ENCODE measurements at regions of chr11 and their contacts with region 1.

Region 1: GRCh38 chr11:7694235-7694634 is 12.0 kb downstream of the OVCH2 start:
- DNase-seq: no peak
- H3K4me3 ChIP-seq: no peak overlapping the region
- H3K4me3 Mint-ChIP-seq: no peak overlapping the region
- H3K27ac ChIP-seq: no peak overlapping the region
- H3K27ac Mint-ChIP-seq: no peak overlapping the region
- H3K4me1 ChIP-seq: peaks cover 6% of the 10 kb centered on the region
- H3K4me1 Mint-ChIP-seq: no peaks in the 10 kb centered on the region
- H3K27me3 ChIP-seq: no peaks in the 10 kb centered on the region
- H3K27me3 Mint-ChIP-seq: peaks cover 21% of the 10 kb centered on the region in 2 donors

Region 2: DNA sequence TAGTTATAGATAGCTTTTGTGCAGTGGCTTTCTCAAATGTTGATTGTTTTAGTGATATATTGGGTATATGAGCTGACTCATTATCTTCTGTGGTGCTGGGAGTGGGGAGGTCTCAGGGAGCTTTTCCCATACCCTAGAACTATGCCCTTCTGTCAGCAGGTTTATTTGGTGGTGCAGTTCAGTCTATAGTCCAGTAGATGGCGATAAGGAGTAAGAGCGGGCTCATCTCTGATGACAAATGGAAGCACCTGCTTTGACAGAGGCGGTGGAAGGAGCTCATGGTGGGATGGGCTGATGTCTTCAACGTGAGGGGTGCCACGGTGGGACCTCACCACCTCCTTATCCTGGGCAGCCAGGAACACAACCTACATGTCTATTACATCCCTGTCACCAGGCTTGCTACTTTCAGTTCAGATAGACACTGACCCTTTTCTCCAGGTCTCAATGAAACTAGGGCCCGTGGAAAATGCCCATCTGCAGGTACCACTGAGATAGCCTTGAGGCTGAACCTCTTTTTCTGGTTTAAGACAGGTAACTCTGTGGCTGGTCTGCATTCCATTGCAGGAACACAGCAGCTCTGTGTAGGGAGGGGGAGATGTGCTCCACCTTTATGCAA is 881.7 kb before region 1 on chr11:
- CTCF ChIA-PET with region 1: interaction called, 8 read pairs
- POLR2A ChIA-PET with region 1: no interaction called
- intact Hi-C with region 1: loop called (anchors 1 kb)
- DNase-seq: peak; percentile 39 to 51 (median 45)
- H3K4me3 ChIP-seq: no peak overlapping the region
- H3K4me3 Mint-ChIP-seq: peak overlapping the region in 1 of 8 donors; percentile 36
- H3K27ac ChIP-seq: no peak overlapping the region
- H3K27ac Mint-ChIP-seq: no peak overlapping the region
- H3K4me1 ChIP-seq: no peaks in the 10 kb centered on the region
- H3K4me1 Mint-ChIP-seq: peaks cover 0 to 2% (median 0%) of the 10 kb centered on the region in 4 donors
- H3K27me3 ChIP-seq: no peaks in the 10 kb centered on the region
- H3K27me3 Mint-ChIP-seq: peaks cover 27 to 35% of the 10 kb centered on the region in 2 donors

Region 3: DNA sequence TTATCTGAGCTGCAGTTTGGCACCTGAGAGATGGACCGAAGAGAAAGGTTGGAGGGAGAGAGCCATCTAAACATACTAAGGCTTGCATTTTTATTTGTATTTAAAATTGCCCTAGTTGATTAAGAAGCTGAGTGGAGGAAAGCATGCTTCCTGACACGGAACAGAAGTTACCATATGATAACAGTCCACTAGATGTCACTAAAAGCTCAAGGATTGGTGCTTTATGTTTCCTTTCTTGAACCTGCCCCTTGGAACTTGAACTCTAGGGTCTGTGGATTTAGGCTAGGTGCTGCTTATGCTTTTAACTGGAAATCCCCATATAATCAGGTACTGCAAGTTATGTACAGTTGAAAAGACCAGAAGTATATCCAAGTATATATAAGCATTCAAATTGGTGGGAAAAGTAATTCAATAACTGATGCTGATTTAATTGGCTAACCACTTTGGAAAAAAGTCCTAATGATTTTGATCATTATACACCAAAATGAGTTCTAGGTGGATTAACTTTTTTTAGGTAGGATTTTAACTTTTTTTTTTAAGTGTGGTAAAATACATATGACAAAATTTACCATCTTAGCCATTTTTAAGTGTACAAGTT is 595.9 kb before region 1 on chr11:
- CTCF ChIA-PET with region 1: interaction called, 29 read pairs
- POLR2A ChIA-PET with region 1: no interaction called
- intact Hi-C with region 1: loop called (anchors 1 kb)
- DNase-seq: peak; percentile 32 to 47 (median 39)
- H3K4me3 ChIP-seq: no peak overlapping the region
- H3K4me3 Mint-ChIP-seq: no peak overlapping the region
- H3K27ac ChIP-seq: no peak overlapping the region
- H3K27ac Mint-ChIP-seq: no peak overlapping the region
- H3K4me1 ChIP-seq: no peaks in the 10 kb centered on the region
- H3K4me1 Mint-ChIP-seq: no peaks in the 10 kb centered on the region
- H3K27me3 ChIP-seq: no peaks in the 10 kb centered on the region
- H3K27me3 Mint-ChIP-seq: peaks cover 5 to 11% of the 10 kb centered on the region in 2 donors

Region 4: GRCh38 chr11:7612661-7613393 is 81.4 kb before region 1 on chr11:
- CTCF ChIA-PET with region 1: no interaction called
- POLR2A ChIA-PET with region 1: no interaction called
- intact Hi-C with region 1: no loop called
- DNase-seq: no peak
- H3K4me3 ChIP-seq: no peak overlapping the region
- H3K4me3 Mint-ChIP-seq: no peak overlapping the region
- H3K27ac ChIP-seq: no peak overlapping the region
- H3K27ac Mint-ChIP-seq: no peak overlapping the region
- H3K4me1 ChIP-seq: no peaks in the 10 kb centered on the region
- H3K4me1 Mint-ChIP-seq: no peaks in the 10 kb centered on the region
- H3K27me3 ChIP-seq: no peaks in the 10 kb centered on the region
- H3K27me3 Mint-ChIP-seq: no peaks in the 10 kb centered on the region

Region 5: DNA sequence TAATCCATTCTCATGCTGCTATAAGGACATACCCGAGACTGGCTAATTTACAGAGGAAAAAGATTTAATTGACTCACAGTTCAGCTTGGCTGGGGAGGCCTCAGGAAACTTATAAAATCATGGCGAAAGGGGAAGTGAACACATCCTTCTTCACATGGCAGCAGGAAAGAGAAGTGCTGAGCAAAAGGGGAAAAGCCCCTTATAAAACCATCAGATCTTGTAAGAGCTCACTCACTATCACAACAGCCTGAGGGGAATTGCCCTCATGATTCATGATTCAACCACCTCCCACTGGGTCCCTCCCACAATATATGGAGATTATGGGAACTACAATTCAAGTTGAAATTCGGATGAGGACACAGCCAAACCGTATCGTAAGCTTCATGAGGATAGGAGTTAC is 17.2 kb before region 1 on chr11:
- CTCF ChIA-PET with region 1: interaction called, 16 read pairs
- POLR2A ChIA-PET with region 1: no interaction called
- intact Hi-C with region 1: no loop called
- DNase-seq: no peak
- H3K4me3 ChIP-seq: no peak overlapping the region
- H3K4me3 Mint-ChIP-seq: no peak overlapping the region
- H3K27ac ChIP-seq: no peak overlapping the region
- H3K27ac Mint-ChIP-seq: no peak overlapping the region
- H3K4me1 ChIP-seq: peaks cover 14% of the 10 kb centered on the region
- H3K4me1 Mint-ChIP-seq: peaks cover 5 to 18% (median 11%) of the 10 kb centered on the region in 4 donors
- H3K27me3 ChIP-seq: peaks cover 7% of the 10 kb centered on the region
- H3K27me3 Mint-ChIP-seq: peaks cover 41 to 59% of the 10 kb centered on the region in 2 donors

Region 6: GRCh38 chr11:7706377-7706776 is 12.1 kb after region 1 on chr11 and contains the start of gene OVCH2:
- CTCF ChIA-PET with region 1: interaction called, 10 read pairs
- POLR2A ChIA-PET with region 1: no interaction called
- intact Hi-C with region 1: no loop called
- DNase-seq: no peak
- H3K4me3 ChIP-seq: no peak within 1 kb of the TSS
- H3K4me3 Mint-ChIP-seq: no peak within 1 kb of the TSS
- H3K27ac ChIP-seq: no peak within 1 kb of the TSS
- H3K27ac Mint-ChIP-seq: no peak within 1 kb of the TSS
- H3K4me1 ChIP-seq: no peaks in the 10 kb centered on the region
- H3K4me1 Mint-ChIP-seq: no peaks in the 10 kb centered on the region
- H3K27me3 ChIP-seq: peaks cover 3% of the 10 kb centered on the region
- H3K27me3 Mint-ChIP-seq: peaks cover 20 to 29% of the 10 kb centered on the region in 2 donors
- total RNA-seq, gene OVCH2: not detected

Measured in CD4-positive, alpha-beta memory T cell (primary cell).